ENCODE measurements at regions of chr7 and their contacts with region 1.

Region 1: DNA sequence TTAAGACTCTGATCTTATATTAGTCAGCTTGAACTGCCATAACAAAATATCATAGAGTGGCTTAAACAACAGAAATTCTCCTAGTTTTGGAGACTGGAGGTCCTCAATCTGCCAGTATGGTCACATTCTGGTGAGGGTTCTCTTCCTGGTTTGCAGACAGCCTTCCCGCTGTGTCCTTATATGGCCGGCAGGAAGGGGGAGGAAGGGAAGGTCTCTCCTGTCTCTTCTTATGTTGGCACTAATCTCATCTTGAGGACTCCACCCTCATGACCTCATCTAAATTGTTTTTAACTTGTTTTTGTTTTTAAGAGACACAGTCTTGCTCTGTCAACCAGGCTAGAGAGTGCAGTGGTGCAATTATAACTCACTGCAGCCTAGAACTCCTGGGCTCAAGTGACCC is 53.1 kb downstream of the VPS41 start:
- DNase-seq: peak in 1 of 4 experiments; percentile 33
- ATAC-seq: peak; percentile 87
- H3K4me3 ChIP-seq: no peak overlapping the region
- H3K27ac ChIP-seq: peak overlapping the region; percentile 34; the same call in 2 of the 3 replicates
- H3K4me1 ChIP-seq: peaks cover 0 to 15% of the 10 kb centered on the region in 2 experiments; a peak in 4 of 5 replicates
- H3K27me3 ChIP-seq: no peaks in the 10 kb centered on the region
- CTCF ChIP-seq: no peak
- EP300 ChIP-seq: no peak
- POLR2A ChIP-seq: no peak
- RAD21 ChIP-seq: no peak

Region 2: DNA sequence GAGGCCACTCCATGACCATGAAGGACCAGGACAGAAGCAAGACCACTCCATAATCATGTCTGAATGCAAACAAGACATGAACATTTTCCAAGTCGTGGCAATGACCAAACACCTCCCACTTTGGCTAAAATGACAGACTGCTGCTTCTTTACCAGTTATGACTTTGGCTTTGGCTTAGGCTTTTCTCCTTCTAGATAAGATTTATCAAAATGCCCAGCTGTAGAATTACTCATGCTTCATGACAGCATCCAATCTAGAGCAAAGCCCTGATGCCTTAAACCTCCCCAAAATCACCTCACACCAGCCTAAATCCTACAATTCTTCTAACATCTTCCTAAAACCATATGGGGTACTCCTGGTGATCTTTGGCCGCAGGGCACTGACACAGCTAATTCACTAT is 49.0 kb before region 1 on chr7:
- CTCF ChIA-PET with region 1: no interaction called
- POLR2A ChIA-PET with region 1: no interaction called
- in situ Hi-C with region 1: no loop called
- intact Hi-C with region 1: no loop called
- DNase-seq: peak in 2 of 4 experiments; percentile 27 to 52
- ATAC-seq: peak; percentile 80
- H3K4me3 ChIP-seq: no peak overlapping the region
- H3K27ac ChIP-seq: no peak overlapping the region
- H3K4me1 ChIP-seq: peaks cover 0 to 10% of the 10 kb centered on the region in 2 experiments; a peak in 2 of 5 replicates
- H3K27me3 ChIP-seq: no peaks in the 10 kb centered on the region
- CTCF ChIP-seq: no peak
- EP300 ChIP-seq: peak; percentile 66; the same call in 1 of the 2 replicates
- POLR2A ChIP-seq: no peak
- RAD21 ChIP-seq: no peak

Region 3: DNA sequence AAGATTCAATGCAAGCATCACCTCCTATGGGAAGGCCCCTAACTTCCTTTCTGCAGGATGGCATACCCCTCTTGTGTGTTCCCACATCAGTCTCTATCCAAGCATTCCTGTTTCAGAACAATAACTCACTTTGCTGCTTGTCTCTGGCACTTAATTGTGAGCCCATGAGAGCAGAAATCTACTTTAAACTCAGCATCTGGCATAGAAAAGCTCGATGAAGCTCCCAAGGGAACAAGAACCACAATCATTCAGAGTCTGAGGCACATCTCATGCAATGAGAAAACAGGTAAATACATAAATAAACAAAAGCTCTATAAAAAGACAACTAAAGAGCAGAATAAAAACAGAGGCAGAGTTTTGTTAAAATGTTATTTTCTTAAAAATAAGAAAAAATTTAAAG is 13.1 kb before region 1 on chr7:
- CTCF ChIA-PET with region 1: no interaction called
- POLR2A ChIA-PET with region 1: interaction called, 10 read pairs
- in situ Hi-C with region 1: no loop called
- intact Hi-C with region 1: no loop called
- DNase-seq: no peak
- ATAC-seq: no peak
- H3K4me3 ChIP-seq: no peak overlapping the region
- H3K27ac ChIP-seq: no peak overlapping the region
- H3K4me1 ChIP-seq: peaks cover 0 to 10% of the 10 kb centered on the region in 2 experiments; a peak in 2 of 5 replicates
- H3K27me3 ChIP-seq: no peaks in the 10 kb centered on the region
- CTCF ChIP-seq: no peak
- EP300 ChIP-seq: no peak
- POLR2A ChIP-seq: no peak
- RAD21 ChIP-seq: no peak